ENCODE measurements at regions of chr1 and their contacts with region 1.

Region 1: DNA sequence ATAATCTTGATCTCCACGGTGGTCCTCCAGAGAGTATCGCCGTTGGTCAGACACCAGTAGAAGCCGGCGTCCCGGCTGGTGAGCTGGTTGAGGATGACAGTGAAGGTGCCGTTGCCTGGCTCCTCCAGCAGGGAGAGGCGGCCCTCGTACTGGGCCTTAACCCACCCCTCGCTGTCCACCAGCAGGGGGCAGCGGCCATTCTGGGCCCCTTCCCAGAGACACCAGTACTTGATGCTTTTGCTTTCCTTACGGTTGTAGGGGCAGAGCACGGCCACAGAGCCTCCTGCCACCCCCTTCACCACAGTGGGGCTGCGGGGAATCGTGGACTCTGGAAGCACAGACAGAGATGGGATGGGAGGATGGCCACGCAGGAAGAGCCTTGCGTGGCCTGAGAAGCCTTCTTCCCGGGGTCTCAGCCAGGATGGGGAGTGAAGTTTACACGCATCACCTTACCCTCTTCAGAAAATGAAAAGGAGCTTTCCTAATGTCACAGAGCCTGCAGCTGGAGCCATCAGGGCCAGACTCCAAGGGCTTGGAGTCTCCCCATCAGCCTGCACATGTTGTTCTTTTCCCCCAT is 10.7 kb downstream of the PIGR start:
- DNase-seq: peak; percentile 64
- CTCF ChIP-seq: peak; percentile 49

Region 2: DNA sequence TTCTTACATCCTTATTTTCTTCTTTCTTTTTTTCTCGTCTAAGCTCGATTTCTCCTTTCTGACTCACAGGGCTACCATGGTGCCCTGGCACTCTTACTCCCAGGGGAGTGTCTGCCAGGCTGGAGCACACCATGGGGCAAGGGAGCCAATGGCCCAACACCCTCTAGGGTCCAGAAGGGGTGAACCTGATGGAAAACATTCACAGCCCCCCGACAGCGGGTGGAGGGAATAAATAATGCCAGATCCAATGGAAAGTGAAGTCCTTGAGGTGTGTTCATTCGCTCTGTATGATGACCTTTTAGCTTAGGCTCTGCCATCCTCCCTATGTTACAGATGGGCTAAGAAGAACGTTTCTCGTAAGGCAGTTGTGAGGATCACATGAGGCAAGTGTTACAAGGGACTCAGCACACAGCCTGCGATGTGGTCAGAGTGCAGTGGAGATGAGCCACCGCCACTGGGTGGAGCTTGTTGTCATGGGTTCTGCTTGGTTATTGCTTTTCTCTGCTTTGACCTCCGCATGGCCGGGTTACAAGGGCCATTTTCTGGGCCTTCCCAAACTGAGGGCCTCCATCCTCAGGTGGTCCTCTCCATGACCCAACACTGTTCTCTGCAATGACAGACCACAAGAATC is 10.4 kb before region 1 on chr1:
- CTCF ChIA-PET with region 1: interaction called, 416 read pairs
- POLR2A ChIA-PET with region 1: interaction called, 3 read pairs
- DNase-seq: peak; percentile 81
- CTCF ChIP-seq: peak; percentile 69

Region 3: GRCh38 chr1:206955476-206956451 is 20.2 kb after region 1 on chr1:
- CTCF ChIA-PET with region 1: interaction called, 416 read pairs
- POLR2A ChIA-PET with region 1: no interaction called
- DNase-seq: peak; percentile 59
- CTCF ChIP-seq: no peak

Region 4: GRCh38 chr1:207058878-207059867 is 123.6 kb after region 1 on chr1:
- CTCF ChIA-PET with region 1: no interaction called
- POLR2A ChIA-PET with region 1: no interaction called
- DNase-seq: no peak
- CTCF ChIP-seq: no peak

Region 5: DNA sequence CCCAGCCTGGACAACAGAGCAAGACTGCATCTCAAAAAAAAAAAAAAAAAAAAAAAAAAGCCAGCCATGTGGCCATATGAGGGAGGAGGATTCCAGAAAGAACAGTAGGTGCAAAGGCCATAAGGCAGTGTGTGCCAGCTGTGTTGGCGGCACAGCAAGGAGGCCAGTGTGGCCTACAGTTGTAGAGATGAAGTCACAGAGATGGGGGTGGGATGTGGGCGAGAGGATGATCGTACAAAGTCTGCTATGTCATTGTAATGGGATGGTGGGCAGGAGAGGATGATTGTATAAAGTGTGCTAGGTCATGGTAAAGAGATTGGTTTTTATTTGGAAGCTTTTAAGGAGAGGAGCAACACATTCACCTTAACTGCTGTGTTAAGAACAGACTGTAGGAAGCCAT is 550.6 kb after region 1 on chr1:
- CTCF ChIA-PET with region 1: no interaction called
- POLR2A ChIA-PET with region 1: no interaction called
- DNase-seq: no peak
- CTCF ChIP-seq: no peak